HepG2 (cell line): ENCODE measurements at regions of chr1 and their contacts with region 1.

Region 1: GRCh38 chr1:154546264-154547063 is 12.0 kb downstream of the UBE2Q1 start:
- DNase-seq: peak; percentile 72
- ATAC-seq: peak; percentile 93
- H3K4me3 ChIP-seq: no peak overlapping the region
- H3K27ac ChIP-seq: no peak overlapping the region
- H3K4me1 ChIP-seq: peaks cover 27% of the 10 kb centered on the region
- H3K27me3 ChIP-seq: peaks cover 0 to 21% of the 10 kb centered on the region in 2 experiments; a peak in 3 of 5 replicates
- CTCF ChIP-seq: peak; percentile 88
- EP300 ChIP-seq: no peak
- POLR2A ChIP-seq: no peak
- RAD21 ChIP-seq: peak; percentile 86

Region 2: GRCh38 chr1:154479764-154480421 is 66.6 kb before region 1 on chr1:
- CTCF ChIA-PET with region 1: interaction called, 14 read pairs
- POLR2A ChIA-PET with region 1: interaction called, 4 read pairs
- in situ Hi-C with region 1: loop called (anchors 5 kb)
- intact Hi-C with region 1: loop called (anchors 1 kb)
- DNase-seq: peak; percentile 74
- ATAC-seq: peak; percentile 94
- H3K4me3 ChIP-seq: no peak overlapping the region
- H3K27ac ChIP-seq: no peak overlapping the region
- H3K4me1 ChIP-seq: peaks cover 24% of the 10 kb centered on the region
- H3K27me3 ChIP-seq: peaks cover 0 to 3% of the 10 kb centered on the region in 2 experiments; a peak in 1 of 5 replicates
- CTCF ChIP-seq: peak; percentile 90
- EP300 ChIP-seq: no peak
- POLR2A ChIP-seq: no peak
- RAD21 ChIP-seq: peak; percentile 85

Region 3: DNA sequence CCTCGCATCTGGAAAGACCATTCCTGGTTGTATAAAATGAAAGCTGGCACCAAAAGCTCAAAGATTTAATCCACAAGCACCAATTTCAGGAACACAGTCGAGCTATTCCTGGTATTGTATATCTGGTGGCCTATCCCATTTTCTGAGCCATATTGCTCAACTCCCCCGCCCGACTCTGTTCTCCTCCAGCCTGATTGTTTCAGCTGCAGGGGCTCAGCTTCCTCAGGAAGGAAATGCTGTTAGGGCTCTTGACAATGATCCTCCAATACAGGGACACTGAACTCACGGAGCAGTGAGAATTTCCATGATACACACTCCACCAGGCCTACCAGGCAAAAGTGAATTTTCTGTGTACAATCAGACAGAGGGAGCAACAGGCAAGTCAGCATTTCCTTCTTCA is 61.4 kb before region 1 on chr1:
- CTCF ChIA-PET with region 1: interaction called, 14 read pairs
- POLR2A ChIA-PET with region 1: interaction called, 4 read pairs
- in situ Hi-C with region 1: loop called (anchors 5 kb)
- intact Hi-C with region 1: loop called (anchors 1 kb)
- DNase-seq: no peak
- ATAC-seq: no peak
- H3K4me3 ChIP-seq: no peak overlapping the region
- H3K27ac ChIP-seq: no peak overlapping the region
- H3K4me1 ChIP-seq: 0 out of 2 replicates have a peak, but pooled peaks cover under 1% of the 10 kb centered on the region
- H3K27me3 ChIP-seq: peaks cover 0 to 6% of the 10 kb centered on the region in 2 experiments; a peak in 3 of 5 replicates
- CTCF ChIP-seq: no peak
- EP300 ChIP-seq: no peak
- POLR2A ChIP-seq: no peak
- RAD21 ChIP-seq: no peak

Region 4: GRCh38 chr1:154533952-154534844 is 12.3 kb before region 1 on chr1:
- CTCF ChIA-PET with region 1: interaction called, 22 read pairs
- POLR2A ChIA-PET with region 1: no interaction called
- in situ Hi-C with region 1: no loop called
- intact Hi-C with region 1: loop called (anchors 1 kb)
- DNase-seq: peak; percentile 59
- ATAC-seq: peak; percentile 82
- H3K4me3 ChIP-seq: no peak overlapping the region
- H3K27ac ChIP-seq: no peak overlapping the region
- H3K4me1 ChIP-seq: no peaks in the 10 kb centered on the region
- H3K27me3 ChIP-seq: no peaks in the 10 kb centered on the region
- CTCF ChIP-seq: peak; percentile 81
- EP300 ChIP-seq: no peak
- POLR2A ChIP-seq: no peak
- RAD21 ChIP-seq: peak; percentile 49; the same call in 1 of the 2 replicates

Region 5: GRCh38 chr1:154565876-154566275 is 19.4 kb after region 1 on chr1:
- CTCF ChIA-PET with region 1: no interaction called
- POLR2A ChIA-PET with region 1: no interaction called
- in situ Hi-C with region 1: no loop called
- intact Hi-C with region 1: no loop called
- DNase-seq: no peak
- ATAC-seq: no peak
- H3K4me3 ChIP-seq: no peak overlapping the region
- H3K27ac ChIP-seq: no peak overlapping the region
- H3K4me1 ChIP-seq: no peaks in the 10 kb centered on the region
- H3K27me3 ChIP-seq: peaks cover 3 to 19% of the 10 kb centered on the region in 2 experiments; a peak in 3 of 5 replicates
- CTCF ChIP-seq: no peak
- EP300 ChIP-seq: no peak
- POLR2A ChIP-seq: no peak
- RAD21 ChIP-seq: no peak